B cell (primary cell): ENCODE measurements at regions of chr7 and their contacts with region 1.

Region 1: GRCh38 chr7:134432296-134433152 is 26.4 kb downstream of the AKR1B1 start:
- DNase-seq: peak; percentile 88
- ATAC-seq: peak; percentile 87
- H3K4me3 ChIP-seq: peak overlapping the region in 4 of 5 experiments; percentile 28 to 57 (median 46)
- H3K4me3 Mint-ChIP-seq: peak overlapping the region; percentile 86
- H3K27ac ChIP-seq: peak overlapping the region; percentile 29 to 62
- H3K27ac Mint-ChIP-seq: peak overlapping the region; percentile 86
- H3K4me1 ChIP-seq: peaks cover 17 to 23% of the 10 kb centered on the region in 2 donors
- H3K4me1 Mint-ChIP-seq: peaks cover 19% of the 10 kb centered on the region
- H3K27me3 ChIP-seq: no peaks in the 10 kb centered on the region
- H3K27me3 Mint-ChIP-seq: peaks cover 4% of the 10 kb centered on the region
- CTCF ChIP-seq: peak; percentile 82

Region 2: DNA sequence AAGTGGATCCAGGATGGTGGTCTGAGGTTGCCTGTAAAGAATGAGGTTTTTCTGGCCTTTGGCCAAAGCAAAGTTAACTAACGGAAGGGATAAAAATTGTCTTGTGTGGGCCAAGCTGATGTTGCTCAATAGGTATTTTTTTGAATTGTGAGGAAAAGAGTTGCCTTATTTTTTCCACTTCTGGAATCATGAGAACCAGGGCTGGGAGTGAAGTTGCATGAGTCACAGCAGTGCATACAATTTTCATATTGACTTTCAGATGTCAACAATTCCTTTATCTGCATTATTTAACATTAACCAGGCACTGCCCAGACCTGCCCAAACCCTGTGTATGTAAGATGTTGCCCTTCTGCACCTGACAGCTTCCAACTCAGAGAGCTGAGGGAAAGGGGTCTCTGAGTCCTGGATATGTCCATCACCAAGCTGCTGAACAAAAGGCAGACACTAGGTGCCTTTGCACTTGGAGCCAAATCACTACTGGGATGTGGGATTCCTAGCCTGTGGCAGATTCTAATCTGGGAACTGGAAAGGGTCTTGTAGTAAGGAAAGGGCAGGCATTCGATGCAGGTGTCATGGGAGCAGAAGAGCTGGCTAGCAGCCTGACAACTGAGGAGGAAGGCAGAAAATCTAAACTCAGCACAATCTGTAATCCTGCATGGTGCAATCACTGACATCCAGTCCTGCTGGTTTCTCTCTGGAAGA is 63.5 kb before region 1 on chr7:
- CTCF ChIA-PET with region 1: no interaction called
- POLR2A ChIA-PET with region 1: no interaction called
- intact Hi-C with region 1: no loop called
- DNase-seq: no peak
- ATAC-seq: no peak
- H3K4me3 ChIP-seq: no peak overlapping the region
- H3K4me3 Mint-ChIP-seq: no peak overlapping the region
- H3K27ac ChIP-seq: no peak overlapping the region
- H3K27ac Mint-ChIP-seq: no peak overlapping the region
- H3K4me1 ChIP-seq: no peaks in the 10 kb centered on the region
- H3K4me1 Mint-ChIP-seq: no peaks in the 10 kb centered on the region
- H3K27me3 ChIP-seq: peaks cover 0 to 8% (median 2%) of the 10 kb centered on the region in 4 experiments
- H3K27me3 Mint-ChIP-seq: peaks cover 34% of the 10 kb centered on the region
- CTCF ChIP-seq: no peak

Region 3: DNA sequence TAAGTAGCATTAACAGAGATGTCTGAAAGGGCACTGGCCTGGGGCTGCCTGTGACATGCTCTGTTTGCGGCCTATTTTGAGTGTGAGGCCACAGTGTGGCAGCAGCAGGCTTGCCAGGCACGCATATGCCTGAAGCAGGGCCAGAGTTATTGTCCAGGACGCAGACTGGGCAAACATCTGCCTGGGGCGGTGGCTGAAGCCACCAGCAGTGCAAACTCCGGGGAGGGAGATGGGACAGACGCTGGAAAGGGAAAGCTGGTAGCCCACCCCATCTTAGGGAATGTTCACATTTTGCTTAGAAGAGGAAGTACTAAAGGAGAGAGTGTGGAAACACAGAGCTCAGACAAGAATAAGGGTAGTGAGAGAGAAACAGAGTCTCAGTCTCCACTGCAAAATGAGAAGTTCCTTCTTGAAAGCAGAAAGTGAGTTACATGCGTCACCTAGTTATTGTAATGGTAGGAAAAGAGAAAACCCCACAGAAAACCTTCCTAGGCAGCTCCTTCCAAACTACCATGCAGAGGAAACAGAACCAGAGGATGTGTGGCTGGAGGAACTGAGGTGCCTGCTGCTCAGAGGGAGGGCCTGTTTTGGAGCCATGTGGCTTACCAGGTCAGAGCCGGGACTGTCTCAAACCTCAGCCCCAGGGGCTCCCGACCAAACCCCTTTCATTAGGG is 11.8 kb after region 1 on chr7:
- CTCF ChIA-PET with region 1: interaction called, 16 read pairs
- POLR2A ChIA-PET with region 1: no interaction called
- intact Hi-C with region 1: no loop called
- DNase-seq: no peak
- ATAC-seq: no peak
- H3K4me3 ChIP-seq: no peak overlapping the region
- H3K4me3 Mint-ChIP-seq: no peak overlapping the region
- H3K27ac ChIP-seq: no peak overlapping the region
- H3K27ac Mint-ChIP-seq: no peak overlapping the region
- H3K4me1 ChIP-seq: no peaks in the 10 kb centered on the region
- H3K4me1 Mint-ChIP-seq: no peaks in the 10 kb centered on the region
- H3K27me3 ChIP-seq: no peaks in the 10 kb centered on the region
- H3K27me3 Mint-ChIP-seq: no peaks in the 10 kb centered on the region
- CTCF ChIP-seq: no peak

Region 4: GRCh38 chr7:134514663-134515062 is 82.1 kb after region 1 on chr7:
- CTCF ChIA-PET with region 1: interaction called, 80 read pairs
- POLR2A ChIA-PET with region 1: no interaction called
- intact Hi-C with region 1: loop called (anchors 1 kb)
- DNase-seq: peak; percentile 74
- ATAC-seq: peak; percentile 69
- H3K4me3 ChIP-seq: no peak overlapping the region
- H3K4me3 Mint-ChIP-seq: no peak overlapping the region
- H3K27ac ChIP-seq: no peak overlapping the region
- H3K27ac Mint-ChIP-seq: no peak overlapping the region
- H3K4me1 ChIP-seq: peaks cover 0 to 3% of the 10 kb centered on the region in 2 donors
- H3K4me1 Mint-ChIP-seq: peaks cover 2% of the 10 kb centered on the region
- H3K27me3 ChIP-seq: peaks cover 0 to 9% (median 4%) of the 10 kb centered on the region in 4 experiments
- H3K27me3 Mint-ChIP-seq: peaks cover 26% of the 10 kb centered on the region
- CTCF ChIP-seq: peak; percentile 94

Region 5: DNA sequence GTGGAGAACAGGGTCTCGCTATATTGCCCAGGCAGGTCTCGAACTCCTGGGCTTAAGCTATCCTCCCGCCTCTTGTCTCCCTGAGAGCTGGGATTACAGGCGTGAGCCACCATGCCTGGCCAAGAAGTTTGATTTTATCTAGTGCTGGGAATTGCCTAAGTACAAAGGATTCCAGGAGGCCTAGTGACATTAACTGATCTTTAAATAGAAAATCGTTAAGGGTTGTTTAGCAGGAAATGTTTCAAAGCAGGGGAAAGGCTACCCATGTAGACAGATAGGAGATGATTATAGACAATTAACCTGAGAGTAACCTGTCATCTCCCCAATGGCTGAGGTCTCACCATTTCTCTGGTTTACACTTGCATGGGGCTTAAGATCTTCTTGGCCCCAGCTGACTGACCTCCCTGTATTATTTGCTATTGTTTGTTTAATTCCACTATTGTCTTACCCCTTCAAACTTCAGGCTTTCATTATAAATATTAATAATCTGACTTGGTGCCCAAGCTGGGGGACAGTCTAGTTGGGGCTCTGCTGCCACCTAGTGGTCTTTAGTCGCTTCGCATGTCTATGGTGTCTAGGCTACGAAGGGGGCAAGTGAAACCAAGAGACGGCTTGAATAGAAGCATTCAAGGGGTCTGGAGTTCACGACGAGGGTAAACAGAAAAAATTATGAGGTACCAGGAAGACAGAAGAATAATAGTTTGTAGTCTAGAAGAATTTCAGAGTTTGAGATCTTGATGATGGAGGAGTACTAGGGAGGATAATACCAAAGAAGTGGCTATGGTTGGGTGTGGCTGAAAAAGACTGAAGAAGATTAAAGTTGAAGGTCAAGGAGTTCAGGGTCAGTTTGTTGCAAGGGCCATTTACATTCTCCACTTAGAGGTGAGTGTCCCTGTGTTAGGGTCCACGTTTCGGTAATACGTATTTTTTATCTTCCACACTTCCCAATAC is 173.7 kb after region 1 on chr7:
- CTCF ChIA-PET with region 1: interaction called, 160 read pairs
- POLR2A ChIA-PET with region 1: interaction called, 7 read pairs
- intact Hi-C with region 1: no loop called
- DNase-seq: peak; percentile 72
- ATAC-seq: peak; percentile 71
- H3K4me3 ChIP-seq: no peak overlapping the region
- H3K4me3 Mint-ChIP-seq: no peak overlapping the region
- H3K27ac ChIP-seq: no peak overlapping the region
- H3K27ac Mint-ChIP-seq: no peak overlapping the region
- H3K4me1 ChIP-seq: peaks cover 0 to 3% of the 10 kb centered on the region in 2 donors
- H3K4me1 Mint-ChIP-seq: peaks cover 3% of the 10 kb centered on the region
- H3K27me3 ChIP-seq: peaks cover 0 to 13% (median 2%) of the 10 kb centered on the region in 4 experiments
- H3K27me3 Mint-ChIP-seq: peaks cover 43% of the 10 kb centered on the region
- CTCF ChIP-seq: peak; percentile 94

Region 6: DNA sequence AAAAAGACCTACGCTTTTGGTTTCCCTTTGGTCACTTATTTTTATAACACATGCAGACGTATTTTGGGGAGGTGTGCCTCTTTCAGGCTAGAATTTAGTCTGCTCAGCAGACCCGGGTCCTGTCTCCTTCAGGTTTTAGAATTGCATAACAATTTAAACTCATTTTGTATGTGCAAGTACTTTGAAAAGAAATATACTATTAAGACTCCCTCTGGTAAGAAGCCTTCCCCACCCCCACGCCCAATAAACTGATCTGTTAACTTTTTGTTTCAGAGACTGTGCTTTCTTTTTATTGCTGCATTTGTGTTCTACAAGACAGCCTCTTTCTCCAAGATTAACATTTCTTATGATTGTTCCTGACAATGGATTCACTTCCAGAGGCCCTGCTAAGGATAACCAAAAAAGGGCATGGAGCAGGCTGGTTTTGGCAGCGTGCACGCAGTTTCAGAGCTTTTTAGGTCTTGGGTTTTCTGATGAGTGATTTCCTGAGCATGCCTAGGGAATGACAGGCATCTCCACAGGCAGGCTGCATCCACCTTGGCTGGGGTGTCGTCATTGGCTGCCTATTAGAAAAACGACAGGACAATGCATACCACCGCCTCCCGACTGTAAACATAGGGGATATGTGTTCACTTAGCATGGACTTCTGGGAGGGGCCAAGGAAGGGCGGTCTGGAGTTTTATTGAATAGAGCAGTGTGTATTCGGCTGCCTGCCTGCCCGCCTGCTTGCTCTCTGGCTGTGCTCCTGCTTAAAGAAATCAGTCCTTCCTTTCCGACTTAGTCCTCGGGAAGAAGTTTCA is 346.6 kb after region 1 on chr7 and contains the start of gene CALD1:
- CTCF ChIA-PET with region 1: no interaction called
- POLR2A ChIA-PET with region 1: no interaction called
- intact Hi-C with region 1: no loop called
- DNase-seq: no peak
- ATAC-seq: no peak
- H3K4me3 ChIP-seq: no peak within 1 kb of the TSS
- H3K4me3 Mint-ChIP-seq: no peak within 1 kb of the TSS
- H3K27ac ChIP-seq: no peak within 1 kb of the TSS
- H3K27ac Mint-ChIP-seq: no peak within 1 kb of the TSS
- H3K4me1 ChIP-seq: peaks cover 21% of the 10 kb centered on the region in 2 donors
- H3K4me1 Mint-ChIP-seq: no peaks in the 10 kb centered on the region
- H3K27me3 ChIP-seq: peaks cover 0 to 10% (median 9%) of the 10 kb centered on the region in 4 experiments
- H3K27me3 Mint-ChIP-seq: peaks cover 28% of the 10 kb centered on the region
- CTCF ChIP-seq: no peak
- total RNA-seq, gene CALD1: 0.69 and 1.6 TPM in 2 replicates